Lower leg skin (tissue), 4 donors: ENCODE measurements at regions of chr1 and their contacts with region 1.

Region 1: DNA sequence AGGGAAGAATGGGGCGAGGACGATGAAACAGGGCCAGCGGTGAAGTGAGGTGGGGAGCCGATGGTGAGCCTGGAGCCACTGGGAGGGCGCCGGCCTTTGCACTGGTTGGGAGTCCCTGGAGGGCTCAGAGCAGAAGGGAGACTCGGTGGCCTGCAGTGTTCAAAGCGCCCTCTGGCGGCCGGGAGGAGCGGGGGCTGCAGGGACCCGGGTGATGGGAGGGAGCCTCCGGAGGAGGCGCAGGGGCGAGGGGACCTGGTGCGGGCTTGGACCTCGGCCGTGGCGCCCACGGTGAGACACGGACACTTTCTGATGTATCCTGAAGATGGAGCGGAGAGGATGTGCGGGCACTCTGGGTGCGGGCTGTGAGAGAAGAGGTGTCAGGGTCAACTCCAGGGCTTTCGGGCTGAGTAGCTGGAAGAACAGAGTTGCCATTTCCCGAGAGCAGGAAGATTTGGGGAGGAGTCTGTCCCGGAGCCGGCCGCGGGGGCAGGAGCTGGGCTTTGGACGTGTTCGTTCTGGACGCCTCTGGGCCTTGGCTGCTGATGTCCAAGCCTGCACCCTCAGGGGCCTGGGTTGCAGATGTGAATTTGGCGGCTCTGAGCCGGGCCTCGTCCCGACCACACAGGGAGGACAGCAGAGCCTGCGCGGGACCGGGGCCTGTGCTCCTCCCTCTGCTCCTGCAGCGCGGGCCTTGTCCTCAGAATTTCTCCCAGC is 29.7 kb downstream of the HEYL start:
- DNase-seq: peak; percentile 33 to 95
- H3K4me3 ChIP-seq: no peak overlapping the region
- CTCF ChIP-seq: no peak
- POLR2A ChIP-seq: no peak

Region 2: GRCh38 chr1:39711104-39711965 is 101.6 kb after region 1 on chr1:
- intact Hi-C with region 1: loop called (anchors 10 kb)
- DNase-seq: peak in 1 of 2 donors; percentile 49
- H3K4me3 ChIP-seq: no peak overlapping the region
- CTCF ChIP-seq: no peak
- POLR2A ChIP-seq: no peak